Caco-2 (cell line): ENCODE measurements at regions of chr7 and their contacts with region 1.

Region 1: GRCh38 chr7:32479574-32480200 is 10.5 kb downstream of the LSM5 start:
- DNase-seq: peak in 1 of 2 experiments; percentile 54
- H3K4me3 ChIP-seq: no peak overlapping the region
- H3K4me3 Mint-ChIP-seq: no peak overlapping the region
- H3K27ac Mint-ChIP-seq: no peak overlapping the region
- H3K4me1 ChIP-seq: peaks cover 5% of the 10 kb centered on the region; the same call in 1 of the 2 replicates
- H3K4me1 Mint-ChIP-seq: peaks cover 3% of the 10 kb centered on the region
- H3K27me3 ChIP-seq: no peaks in the 10 kb centered on the region
- H3K27me3 Mint-ChIP-seq: no peaks in the 10 kb centered on the region
- CTCF ChIP-seq: peak; percentile 86 to 95

Region 2: GRCh38 chr7:32212321-32212720 is 267.4 kb before region 1 on chr7:
- CTCF ChIA-PET with region 1: interaction called, 32 read pairs
- POLR2A ChIA-PET with region 1: no interaction called
- intact Hi-C with region 1: loop called (anchors 1 kb)
- DNase-seq: no peak
- H3K4me3 ChIP-seq: no peak overlapping the region
- H3K4me3 Mint-ChIP-seq: no peak overlapping the region
- H3K27ac Mint-ChIP-seq: no peak overlapping the region
- H3K4me1 ChIP-seq: no peaks in the 10 kb centered on the region
- H3K4me1 Mint-ChIP-seq: no peaks in the 10 kb centered on the region
- H3K27me3 ChIP-seq: no peaks in the 10 kb centered on the region
- H3K27me3 Mint-ChIP-seq: peaks cover 25% of the 10 kb centered on the region
- CTCF ChIP-seq: no peak

Region 3: DNA sequence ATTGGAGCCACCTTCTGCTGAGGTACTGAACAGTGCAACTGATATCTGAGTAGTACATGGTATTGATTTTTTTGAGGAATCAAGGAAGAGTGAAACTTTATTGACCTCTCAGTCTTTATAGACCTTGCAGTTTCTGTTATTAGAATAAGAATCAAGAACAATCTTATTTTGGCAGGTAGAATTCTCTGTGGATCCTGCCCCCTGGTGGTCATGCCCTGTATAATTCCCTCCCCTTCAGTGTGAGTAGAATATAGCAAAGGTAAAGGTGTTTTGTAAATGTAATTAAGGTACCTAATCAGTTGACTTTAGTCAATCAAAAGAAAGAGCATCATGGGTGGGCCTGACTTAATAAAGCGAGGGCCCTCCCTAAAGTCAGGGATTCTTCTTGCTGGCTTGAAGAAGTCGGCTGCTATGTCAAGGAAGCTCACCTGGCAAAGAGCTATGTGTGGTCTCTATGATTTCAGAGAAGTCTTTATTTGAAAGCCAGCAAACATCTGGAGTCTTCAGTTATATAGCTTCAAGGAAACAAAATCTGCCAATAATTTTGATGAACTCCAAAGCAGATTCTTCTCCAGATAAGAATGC is 132.4 kb before region 1 on chr7:
- CTCF ChIA-PET with region 1: no interaction called
- POLR2A ChIA-PET with region 1: no interaction called
- intact Hi-C with region 1: loop called (anchors 5 kb)
- DNase-seq: peak in 1 of 2 experiments; percentile 43
- H3K4me3 ChIP-seq: no peak overlapping the region
- H3K4me3 Mint-ChIP-seq: no peak overlapping the region
- H3K27ac Mint-ChIP-seq: no peak overlapping the region
- H3K4me1 ChIP-seq: no peaks in the 10 kb centered on the region
- H3K4me1 Mint-ChIP-seq: no peaks in the 10 kb centered on the region
- H3K27me3 ChIP-seq: no peaks in the 10 kb centered on the region
- H3K27me3 Mint-ChIP-seq: peaks cover 8% of the 10 kb centered on the region
- CTCF ChIP-seq: peak; percentile 68 to 82

Region 4: GRCh38 chr7:32390210-32390609 is 89.5 kb before region 1 on chr7:
- CTCF ChIA-PET with region 1: interaction called, 3 read pairs
- POLR2A ChIA-PET with region 1: no interaction called
- intact Hi-C with region 1: loop called (anchors 5 kb)
- DNase-seq: no peak
- H3K4me3 ChIP-seq: no peak overlapping the region
- H3K4me3 Mint-ChIP-seq: no peak overlapping the region
- H3K27ac Mint-ChIP-seq: no peak overlapping the region
- H3K4me1 ChIP-seq: no peaks in the 10 kb centered on the region
- H3K4me1 Mint-ChIP-seq: no peaks in the 10 kb centered on the region
- H3K27me3 ChIP-seq: no peaks in the 10 kb centered on the region; the same call in 1 of the 2 replicates
- H3K27me3 Mint-ChIP-seq: peaks cover 12% of the 10 kb centered on the region
- CTCF ChIP-seq: no peak

Region 5: GRCh38 chr7:32564542-32564941 is 84.9 kb after region 1 on chr7:
- CTCF ChIA-PET with region 1: no interaction called
- POLR2A ChIA-PET with region 1: no interaction called
- intact Hi-C with region 1: no loop called
- DNase-seq: no peak
- H3K4me3 ChIP-seq: no peak overlapping the region
- H3K4me3 Mint-ChIP-seq: no peak overlapping the region
- H3K27ac Mint-ChIP-seq: no peak overlapping the region
- H3K4me1 ChIP-seq: no peaks in the 10 kb centered on the region
- H3K4me1 Mint-ChIP-seq: no peaks in the 10 kb centered on the region
- H3K27me3 ChIP-seq: no peaks in the 10 kb centered on the region
- H3K27me3 Mint-ChIP-seq: no peaks in the 10 kb centered on the region
- CTCF ChIP-seq: no peak